Naive thymus-derived CD8-positive, alpha-beta T cell (primary cell): ENCODE measurements at regions of chr17 and their contacts with region 1.

Region 1: DNA sequence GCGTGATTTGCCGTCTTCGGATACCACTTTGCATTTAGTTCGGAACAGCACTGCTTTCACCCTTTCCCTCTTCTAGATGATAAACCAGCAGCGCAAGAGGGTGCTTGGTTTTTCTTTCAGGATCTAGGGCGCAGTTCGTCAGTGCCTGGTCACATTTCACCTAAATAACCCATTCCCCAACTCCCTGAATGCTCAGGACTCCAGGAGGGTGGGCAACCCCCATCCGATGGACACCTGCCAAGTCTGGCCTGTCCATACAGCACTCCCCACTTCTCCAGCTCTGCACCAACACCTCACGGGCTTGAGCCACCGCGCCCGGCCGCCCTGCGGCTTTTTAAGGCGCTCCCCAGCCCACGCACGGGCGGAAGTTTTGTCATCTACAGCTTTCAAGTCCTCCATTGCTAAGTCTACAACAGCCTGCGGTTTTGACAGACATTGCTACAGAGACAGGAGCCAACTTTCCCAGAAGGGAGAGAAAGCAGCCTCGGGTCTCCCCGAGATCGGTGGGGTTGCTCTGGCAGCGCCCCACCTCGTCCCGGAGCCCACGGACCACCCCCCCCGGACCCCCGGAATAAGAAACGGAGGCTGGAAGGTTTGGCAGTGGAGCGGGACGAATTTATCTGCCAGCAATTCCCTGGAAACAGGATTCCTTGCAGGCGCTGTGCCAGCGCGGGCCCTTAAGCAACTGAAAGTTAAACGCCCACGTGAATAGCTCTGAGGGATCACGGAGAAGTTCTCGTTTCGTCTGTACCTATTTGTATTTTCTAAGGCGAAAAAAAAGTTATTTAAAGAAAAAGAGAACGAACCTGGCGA is 38.6 kb upstream of the SLFN13 start:
- DNase-seq: peak; percentile 53 to 85 (median 70)
- ATAC-seq: peak; percentile 80 to 86
- H3K4me3 Mint-ChIP-seq: peak overlapping the region; percentile 86 to 98 (median 96)
- H3K27ac Mint-ChIP-seq: peak overlapping the region; percentile 96 to 99 (median 98)
- H3K4me1 Mint-ChIP-seq: peaks cover 21 to 64% (median 60%) of the 10 kb centered on the region in 4 donors
- H3K27me3 Mint-ChIP-seq: peaks cover 0 to 16% (median 0%) of the 10 kb centered on the region in 5 donors

Region 2: DNA sequence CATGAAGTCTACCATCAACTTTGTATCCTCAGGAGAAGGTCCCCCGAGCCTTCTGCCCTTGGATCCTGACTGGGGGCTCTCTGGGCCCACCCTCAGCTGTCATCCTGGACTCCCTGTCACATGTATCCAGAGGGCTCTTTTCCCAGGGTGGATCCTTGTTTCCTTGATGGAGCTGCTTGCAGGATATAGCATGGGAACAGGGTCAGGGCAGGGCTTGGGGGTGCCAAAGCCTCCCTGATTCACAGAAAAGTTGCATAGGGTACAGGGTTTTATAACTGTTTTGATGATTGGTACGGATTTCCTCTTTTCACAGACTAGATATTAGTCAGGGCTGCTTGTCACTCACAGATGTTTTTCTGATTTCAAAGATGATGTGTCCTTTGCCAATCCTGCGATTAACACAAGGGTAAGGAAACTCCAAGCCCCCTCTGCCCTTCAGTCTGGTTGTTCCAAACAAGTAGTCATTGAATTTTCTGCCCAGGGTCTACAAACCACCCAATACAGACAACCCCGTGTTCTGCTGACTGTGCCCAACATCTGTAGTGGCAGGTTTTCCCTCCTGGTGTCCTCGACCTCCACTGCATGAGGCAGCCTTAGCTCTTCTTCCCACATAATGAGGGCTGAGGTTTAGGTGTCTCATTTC is 272.4 kb before region 1 on chr17:
- POLR2A ChIA-PET with region 1: interaction called, 12 read pairs
- DNase-seq: peak in 8 of 10 donors; percentile 9 to 66 (median 26)
- ATAC-seq: peak; percentile 44 to 50
- H3K4me3 Mint-ChIP-seq: peak overlapping the region; percentile 64 to 91 (median 84)
- H3K27ac Mint-ChIP-seq: peak overlapping the region; percentile 94 to 98 (median 97)
- H3K4me1 Mint-ChIP-seq: peaks cover 47 to 89% (median 88%) of the 10 kb centered on the region in 4 donors
- H3K27me3 Mint-ChIP-seq: no peaks in the 10 kb centered on the region

Region 3: GRCh38 chr17:35432176-35433074 is 54.7 kb before region 1 on chr17 and contains the start of gene SLFN12:
- POLR2A ChIA-PET with region 1: interaction called, 25 read pairs
- DNase-seq: peak in 9 of 10 donors; percentile 39 to 81 (median 61)
- ATAC-seq: peak; percentile 89 to 92
- H3K4me3 Mint-ChIP-seq: peak within 1 kb of the TSS; percentile 89 to 100 (median 96)
- H3K27ac Mint-ChIP-seq: peak within 1 kb of the TSS; percentile 87 to 98 (median 95)
- H3K4me1 Mint-ChIP-seq: peaks cover 24 to 66% (median 63%) of the 10 kb centered on the region in 4 donors
- H3K27me3 Mint-ChIP-seq: no peaks in the 10 kb centered on the region
- polyA plus RNA-seq, gene SLFN12: 2.0 to 3.1 (median 2.1) TPM

Region 4: GRCh38 chr17:35460354-35460851 is 26.7 kb before region 1 on chr17:
- POLR2A ChIA-PET with region 1: interaction called, 11 read pairs
- DNase-seq: peak; percentile 31 to 84 (median 70)
- ATAC-seq: peak; percentile 86 to 94
- H3K4me3 Mint-ChIP-seq: peak overlapping the region; percentile 70 to 91 (median 83)
- H3K27ac Mint-ChIP-seq: peak overlapping the region; percentile 83 to 97 (median 92)
- H3K4me1 Mint-ChIP-seq: peaks cover 11 to 45% (median 27%) of the 10 kb centered on the region in 4 donors
- H3K27me3 Mint-ChIP-seq: no peaks in the 10 kb centered on the region

Region 5: GRCh38 chr17:35498448-35499178 is 11.5 kb after region 1 on chr17:
- POLR2A ChIA-PET with region 1: interaction called, 12 read pairs
- DNase-seq: no peak
- ATAC-seq: peak in 1 of 2 donors; percentile 30
- H3K4me3 Mint-ChIP-seq: peak overlapping the region; percentile 34 to 78 (median 70)
- H3K27ac Mint-ChIP-seq: peak overlapping the region in 9 of 10 donors; percentile 35 to 83 (median 70)
- H3K4me1 Mint-ChIP-seq: peaks cover 38 to 81% (median 68%) of the 10 kb centered on the region in 4 donors
- H3K27me3 Mint-ChIP-seq: peaks cover 0 to 8% (median 0%) of the 10 kb centered on the region in 5 donors

Region 6: GRCh38 chr17:35531160-35531559 is 44.0 kb after region 1 on chr17:
- POLR2A ChIA-PET with region 1: interaction called, 49 read pairs
- DNase-seq: no peak
- ATAC-seq: no peak
- H3K4me3 Mint-ChIP-seq: peak overlapping the region in 8 of 10 donors; percentile 1 to 83 (median 46)
- H3K27ac Mint-ChIP-seq: peak overlapping the region in 8 of 10 donors; percentile 40 to 98 (median 92)
- H3K4me1 Mint-ChIP-seq: peaks cover 37 to 79% (median 69%) of the 10 kb centered on the region in 4 donors
- H3K27me3 Mint-ChIP-seq: no peaks in the 10 kb centered on the region

Region 7: DNA sequence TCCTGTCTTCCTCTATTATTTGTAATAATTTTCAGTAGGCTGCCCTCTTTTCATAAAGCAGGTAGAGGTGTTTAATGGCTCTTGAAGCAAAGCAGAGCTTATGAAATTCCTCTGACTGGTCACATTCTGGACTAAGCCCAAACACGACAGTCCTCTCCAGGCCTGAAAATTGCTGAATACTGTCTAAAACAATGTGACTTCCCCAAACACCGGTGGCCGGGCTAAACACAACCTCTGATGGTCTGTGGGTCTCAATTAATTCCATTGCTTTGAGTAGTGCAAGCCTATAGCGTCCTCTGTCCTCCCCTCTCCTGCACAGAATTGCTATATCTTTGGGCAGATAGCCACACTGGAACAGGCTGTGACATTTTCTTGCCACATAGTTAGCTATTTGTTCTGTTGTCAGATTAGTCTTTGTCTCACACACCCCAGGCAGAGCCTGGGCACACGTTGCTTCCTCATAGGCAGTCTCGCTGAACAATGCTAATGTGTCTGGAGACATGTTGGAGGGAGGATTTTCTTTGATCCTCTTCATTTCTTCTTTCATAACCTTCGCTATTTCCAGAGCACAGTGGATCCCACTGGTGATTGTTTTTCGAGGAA is 61.2 kb after region 1 on chr17:
- POLR2A ChIA-PET with region 1: no interaction called
- DNase-seq: no peak
- ATAC-seq: no peak
- H3K4me3 Mint-ChIP-seq: no peak overlapping the region
- H3K27ac Mint-ChIP-seq: no peak overlapping the region
- H3K4me1 Mint-ChIP-seq: peaks cover 2 to 17% (median 7%) of the 10 kb centered on the region in 4 donors
- H3K27me3 Mint-ChIP-seq: no peaks in the 10 kb centered on the region

Region 8: DNA sequence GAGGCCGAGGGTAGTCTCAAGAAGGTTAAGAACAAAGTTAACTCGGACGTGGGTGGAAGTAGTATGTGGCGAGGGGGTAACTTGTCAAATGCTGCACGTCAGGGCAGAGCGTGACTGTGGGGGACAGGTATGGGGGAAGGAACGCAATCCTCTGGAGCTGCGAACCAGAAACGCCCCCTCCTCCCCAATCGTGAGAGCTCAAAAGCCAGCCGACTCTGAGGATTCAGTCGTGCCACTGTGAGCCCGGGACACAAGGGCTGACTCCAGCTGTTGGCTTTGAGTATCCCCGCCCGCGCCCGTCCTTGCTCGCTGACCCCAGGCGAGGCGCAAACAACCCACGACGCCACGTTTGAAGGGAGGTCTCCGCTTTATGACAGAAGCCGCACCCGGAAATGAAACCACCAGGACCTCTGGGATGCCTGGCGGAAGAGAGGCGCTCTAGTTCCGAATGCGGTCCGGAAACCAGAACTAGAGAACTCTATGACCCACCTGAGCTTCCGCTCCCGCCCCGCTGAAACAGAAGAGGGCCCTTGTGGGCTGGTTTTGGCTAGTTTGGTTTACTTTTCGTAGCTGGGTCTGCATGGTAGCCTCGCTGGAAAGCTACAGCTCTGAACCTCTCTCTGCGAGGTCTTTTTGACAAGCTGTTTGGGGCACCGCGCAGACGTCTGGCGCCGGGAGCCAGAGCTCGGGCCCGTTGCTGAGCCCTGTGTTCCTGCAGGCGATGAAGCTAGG is 91.2 kb after region 1 on chr17 and contains the start of gene PEX12:
- POLR2A ChIA-PET with region 1: interaction called, 10 read pairs
- DNase-seq: peak; percentile 66 to 95 (median 88)
- ATAC-seq: peak; percentile 96 to 97
- H3K4me3 Mint-ChIP-seq: peak within 1 kb of the TSS; percentile 93 to 100 (median 98)
- H3K27ac Mint-ChIP-seq: peak within 1 kb of the TSS; percentile 98 to 100 (median 99)
- H3K4me1 Mint-ChIP-seq: peaks cover 10 to 30% (median 26%) of the 10 kb centered on the region in 4 donors
- H3K27me3 Mint-ChIP-seq: peaks cover 0 to under 1% (median 0%) of the 10 kb centered on the region in 5 donors
- polyA plus RNA-seq, gene PEX12: 1.7 to 2.5 (median 1.9) TPM